ENCODE measurements at regions of chr2 and their contacts with region 1.

Region 1: DNA sequence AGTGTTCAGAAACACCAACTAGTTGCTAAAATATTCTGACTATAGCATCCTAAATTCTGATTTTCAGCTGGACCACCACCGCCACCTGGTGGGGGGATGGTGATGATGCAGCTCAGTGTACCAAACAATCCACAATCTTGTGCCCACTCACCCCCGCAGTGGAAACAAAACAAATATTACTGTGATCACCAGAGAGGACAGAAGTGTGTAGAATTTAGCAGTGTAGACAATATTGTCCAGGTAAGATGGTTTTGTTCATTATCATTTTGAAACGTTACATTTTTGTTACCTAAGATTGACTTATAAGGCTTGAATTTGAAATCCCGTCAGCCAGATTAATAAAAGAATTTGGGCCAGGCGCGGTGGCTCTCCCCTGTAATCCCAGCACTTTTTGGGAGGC is 31.7 kb upstream of the UBXN4 start:
- ATAC-seq: peak in 4 of 8 experiments; percentile 28 to 71 (median 40)
- H3K4me3 ChIP-seq: no peak overlapping the region
- H3K27ac ChIP-seq: no peak overlapping the region
- H3K4me1 ChIP-seq: no peaks in the 10 kb centered on the region

Region 2: DNA sequence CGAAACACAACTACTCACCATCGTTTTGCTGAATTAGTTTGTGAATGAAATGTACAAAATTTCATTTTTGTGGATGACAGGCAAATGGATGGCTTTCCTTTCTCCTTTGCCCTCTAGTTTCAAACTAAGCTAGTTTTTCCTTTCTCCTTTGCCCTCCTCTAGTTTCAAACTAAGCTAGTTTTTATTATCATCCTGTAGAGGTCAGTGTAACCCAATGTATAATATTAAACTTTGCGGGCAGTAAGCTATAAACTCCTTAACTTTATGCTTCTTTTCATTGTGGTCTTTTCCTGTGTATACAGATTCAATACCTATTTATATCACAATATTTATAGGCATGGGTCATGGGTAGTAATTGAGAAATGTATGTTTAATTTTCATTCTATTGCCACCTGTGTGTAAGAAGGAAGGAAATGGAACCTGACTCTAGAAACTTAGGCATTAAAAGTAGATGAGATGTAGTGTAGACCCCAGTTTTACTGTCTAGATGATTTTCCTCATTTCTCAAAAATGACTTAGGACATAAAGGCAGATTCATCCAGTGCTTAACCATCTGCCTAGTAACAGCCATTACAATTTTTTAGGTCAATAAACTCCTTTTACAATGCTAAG is 720.9 kb before region 1 on chr2:
- in situ Hi-C with region 1: loop called in 1 of 9 experiments (anchors 25 kb)
- ATAC-seq: peak in 4 of 8 experiments; percentile 36 to 77 (median 74)
- H3K4me3 ChIP-seq: no peak overlapping the region
- H3K27ac ChIP-seq: no peak overlapping the region
- H3K4me1 ChIP-seq: no peaks in the 10 kb centered on the region

Region 3: GRCh38 chr2:135004005-135004746 is 705.8 kb before region 1 on chr2:
- in situ Hi-C with region 1: loop called in 4 of 9 experiments (anchors 25 kb)
- ATAC-seq: peak; percentile 94 to 100 (median 100)
- H3K4me3 ChIP-seq: no peak overlapping the region
- H3K27ac ChIP-seq: no peak overlapping the region
- H3K4me1 ChIP-seq: peaks cover 0 to 13% of the 10 kb centered on the region in 2 donors

Region 4: GRCh38 chr2:137252937-137253336 is 1542.9 kb after region 1 on chr2:
- in situ Hi-C with region 1: no loop called
- ATAC-seq: peak in 2 of 8 experiments; percentile 20
- H3K4me3 ChIP-seq: no peak overlapping the region
- H3K27ac ChIP-seq: no peak overlapping the region
- H3K4me1 ChIP-seq: peaks cover 0 to 21% of the 10 kb centered on the region in 2 donors

Measured in motor neuron (in vitro differentiated cells).